ENCODE measurements at regions of chr12 and their contacts with region 1.

Region 1: GRCh38 chr12:120495723-120496412 is at the start of gene DYNLL1:
- DNase-seq: peak; percentile 96 to 98 (median 97)
- H3K4me3 ChIP-seq: peak within 1 kb of the TSS; percentile 93 to 94
- H3K4me3 Mint-ChIP-seq: peak within 1 kb of the TSS; percentile 91 to 98 (median 94)
- H3K27ac ChIP-seq: peak within 1 kb of the TSS; percentile 82
- H3K27ac Mint-ChIP-seq: peak within 1 kb of the TSS; percentile 89 to 96 (median 94)
- H3K4me1 ChIP-seq: peaks cover 19% of the 10 kb centered on the region
- H3K4me1 Mint-ChIP-seq: peaks cover 22 to 49% (median 37%) of the 10 kb centered on the region in 4 donors
- H3K27me3 ChIP-seq: no peaks in the 10 kb centered on the region
- H3K27me3 Mint-ChIP-seq: no peaks in the 10 kb centered on the region
- total RNA-seq, gene DYNLL1: 97.5 to 108 TPM

Region 2: DNA sequence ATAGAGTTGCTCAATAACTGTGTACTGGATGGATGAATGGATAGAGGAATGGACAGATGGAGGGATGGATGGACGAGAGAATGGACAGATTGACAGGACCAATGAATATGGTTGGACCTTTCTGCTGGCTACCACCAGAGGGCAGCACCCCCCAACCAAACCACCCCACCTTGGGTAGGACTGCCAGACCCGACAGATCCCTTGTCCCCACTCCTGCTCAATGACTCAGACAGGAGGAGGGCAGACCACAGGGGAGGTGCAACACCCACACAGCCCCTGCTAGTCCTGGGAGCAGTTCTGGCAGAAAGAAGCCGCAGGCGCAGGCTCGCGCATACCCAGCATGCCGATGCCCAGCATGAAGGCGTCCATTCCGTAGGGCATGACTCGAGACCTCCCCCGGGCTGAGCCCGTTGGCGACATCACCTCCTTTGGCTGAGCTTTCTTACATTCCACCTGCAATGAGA is 139.3 kb before region 1 on chr12:
- CTCF ChIA-PET with region 1: interaction called, 4 read pairs
- POLR2A ChIA-PET with region 1: no interaction called
- intact Hi-C with region 1: loop called (anchors 1 kb)
- DNase-seq: peak; percentile 59 to 66 (median 63)
- H3K4me3 ChIP-seq: no peak overlapping the region
- H3K4me3 Mint-ChIP-seq: no peak overlapping the region
- H3K27ac ChIP-seq: no peak overlapping the region
- H3K27ac Mint-ChIP-seq: peak overlapping the region in 1 of 7 donors; percentile 57
- H3K4me1 ChIP-seq: no peaks in the 10 kb centered on the region
- H3K4me1 Mint-ChIP-seq: peaks cover 0 to 1% (median 0%) of the 10 kb centered on the region in 4 donors
- H3K27me3 ChIP-seq: no peaks in the 10 kb centered on the region
- H3K27me3 Mint-ChIP-seq: peaks cover 9 to 30% of the 10 kb centered on the region in 2 donors

Region 3: DNA sequence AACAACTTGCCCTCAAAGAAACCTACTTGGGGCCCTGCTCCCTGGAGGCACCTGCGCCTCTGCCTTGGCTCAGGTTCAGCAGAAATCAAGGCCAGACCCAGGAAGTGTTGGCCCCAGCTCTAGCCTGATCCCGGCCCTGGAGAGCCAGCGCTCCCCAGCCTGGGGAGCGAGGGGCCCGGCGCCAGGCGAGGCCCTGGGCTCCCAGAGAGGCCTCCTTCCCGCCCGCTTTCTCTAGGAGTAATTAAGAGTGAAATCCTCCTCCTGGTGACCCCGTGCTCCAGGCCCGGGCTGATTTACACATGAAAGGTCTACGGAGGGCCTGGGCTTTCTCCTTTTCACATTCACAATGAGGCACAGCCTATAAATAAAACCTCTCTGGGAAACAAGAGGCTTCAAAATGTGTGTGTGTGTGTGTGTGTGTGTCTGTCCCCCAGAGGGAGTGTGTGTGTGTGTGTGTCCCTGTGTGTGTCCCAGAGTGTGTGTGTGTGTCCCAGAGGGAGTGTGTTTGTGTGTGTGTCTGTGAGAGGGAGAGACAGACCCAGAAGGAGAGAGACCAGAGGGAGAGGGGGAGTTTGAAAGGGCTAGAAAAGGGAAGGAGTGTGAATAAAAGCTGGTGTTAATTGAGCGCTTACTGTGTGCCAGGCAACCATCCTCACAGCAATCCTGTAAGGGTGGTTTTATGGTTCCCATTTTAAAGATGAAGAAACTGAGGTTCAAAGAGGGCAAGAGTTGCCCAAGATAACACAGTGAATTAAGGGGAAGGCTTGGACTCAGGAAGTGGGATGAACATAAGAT is 81.8 kb before region 1 on chr12:
- CTCF ChIA-PET with region 1: no interaction called
- POLR2A ChIA-PET with region 1: no interaction called
- intact Hi-C with region 1: no loop called
- DNase-seq: no peak
- H3K4me3 ChIP-seq: no peak overlapping the region
- H3K4me3 Mint-ChIP-seq: no peak overlapping the region
- H3K27ac ChIP-seq: no peak overlapping the region
- H3K27ac Mint-ChIP-seq: peak overlapping the region in 1 of 7 donors; percentile 13
- H3K4me1 ChIP-seq: no peaks in the 10 kb centered on the region
- H3K4me1 Mint-ChIP-seq: no peaks in the 10 kb centered on the region
- H3K27me3 ChIP-seq: no peaks in the 10 kb centered on the region
- H3K27me3 Mint-ChIP-seq: peaks cover 3 to 9% of the 10 kb centered on the region in 2 donors

Region 4: DNA sequence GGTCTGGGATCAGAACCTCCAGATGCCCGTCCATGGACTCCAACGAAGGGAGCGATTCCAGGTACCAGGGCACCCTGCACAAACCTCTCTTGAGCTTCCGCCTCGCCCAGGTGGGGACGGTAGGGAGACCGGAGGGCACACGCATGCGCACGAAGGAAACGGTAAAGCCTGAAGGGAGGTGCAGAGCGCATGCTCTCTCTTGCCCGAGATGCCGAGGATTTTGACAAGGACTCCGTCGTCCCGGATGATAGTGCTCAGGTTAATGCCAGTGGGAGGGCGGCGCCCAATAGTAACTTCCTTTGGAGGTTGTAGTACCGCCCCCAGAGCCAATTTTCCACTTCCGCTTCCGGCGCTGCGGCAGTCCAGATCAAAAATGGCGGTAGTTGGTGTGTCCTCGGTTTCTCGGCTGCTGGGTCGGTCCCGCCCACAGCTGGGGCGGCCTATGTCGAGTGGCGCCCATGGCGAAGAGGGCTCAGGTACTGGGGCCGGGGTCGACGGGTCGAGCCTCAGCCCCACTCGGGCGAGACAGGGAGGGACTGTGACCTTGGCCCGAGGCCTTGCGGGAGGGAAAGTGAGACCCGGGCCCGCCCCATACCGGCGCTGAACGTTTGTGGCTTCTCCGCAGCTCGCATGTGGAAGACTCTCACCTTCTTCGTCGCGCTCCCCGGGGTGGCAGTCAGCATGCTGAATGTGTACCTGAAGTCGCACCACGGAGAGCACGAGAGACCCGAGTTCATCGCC is 57.9 kb before region 1 on chr12 and contains the start of gene COX6A1:
- CTCF ChIA-PET with region 1: interaction called, 16 read pairs
- POLR2A ChIA-PET with region 1: interaction called, 8 read pairs
- intact Hi-C with region 1: loop called (anchors 2 kb)
- DNase-seq: peak; percentile 94 to 99 (median 98)
- H3K4me3 ChIP-seq: peak within 1 kb of the TSS; percentile 52 to 70
- H3K4me3 Mint-ChIP-seq: peak within 1 kb of the TSS; percentile 92 to 99 (median 96)
- H3K27ac ChIP-seq: peak within 1 kb of the TSS; percentile 76
- H3K27ac Mint-ChIP-seq: peak within 1 kb of the TSS; percentile 86 to 99 (median 96)
- H3K4me1 ChIP-seq: peaks cover 26% of the 10 kb centered on the region
- H3K4me1 Mint-ChIP-seq: peaks cover 18 to 31% (median 27%) of the 10 kb centered on the region in 4 donors
- H3K27me3 ChIP-seq: no peaks in the 10 kb centered on the region
- H3K27me3 Mint-ChIP-seq: peaks cover under 1 to 3% of the 10 kb centered on the region in 2 donors
- total RNA-seq, gene COX6A1: 144 to 158 TPM

Region 5: GRCh38 chr12:120528861-120529525 is 33.1 kb after region 1 on chr12 and contains the start of gene COQ5:
- CTCF ChIA-PET with region 1: no interaction called
- POLR2A ChIA-PET with region 1: interaction called, 24 read pairs
- intact Hi-C with region 1: loop called (anchors 1 kb)
- DNase-seq: peak; percentile 79 to 86 (median 83)
- H3K4me3 ChIP-seq: peak within 1 kb of the TSS; percentile 82 to 84
- H3K4me3 Mint-ChIP-seq: peak within 1 kb of the TSS; percentile 98 to 100 (median 100)
- H3K27ac ChIP-seq: peak within 1 kb of the TSS; percentile 85
- H3K27ac Mint-ChIP-seq: peak within 1 kb of the TSS; percentile 96 to 100 (median 99)
- H3K4me1 ChIP-seq: peaks cover 24% of the 10 kb centered on the region
- H3K4me1 Mint-ChIP-seq: peaks cover 20 to 35% (median 23%) of the 10 kb centered on the region in 4 donors
- H3K27me3 ChIP-seq: no peaks in the 10 kb centered on the region
- H3K27me3 Mint-ChIP-seq: no peaks in the 10 kb centered on the region
- total RNA-seq, gene COQ5: 19.7 to 21.6 TPM

Region 6: DNA sequence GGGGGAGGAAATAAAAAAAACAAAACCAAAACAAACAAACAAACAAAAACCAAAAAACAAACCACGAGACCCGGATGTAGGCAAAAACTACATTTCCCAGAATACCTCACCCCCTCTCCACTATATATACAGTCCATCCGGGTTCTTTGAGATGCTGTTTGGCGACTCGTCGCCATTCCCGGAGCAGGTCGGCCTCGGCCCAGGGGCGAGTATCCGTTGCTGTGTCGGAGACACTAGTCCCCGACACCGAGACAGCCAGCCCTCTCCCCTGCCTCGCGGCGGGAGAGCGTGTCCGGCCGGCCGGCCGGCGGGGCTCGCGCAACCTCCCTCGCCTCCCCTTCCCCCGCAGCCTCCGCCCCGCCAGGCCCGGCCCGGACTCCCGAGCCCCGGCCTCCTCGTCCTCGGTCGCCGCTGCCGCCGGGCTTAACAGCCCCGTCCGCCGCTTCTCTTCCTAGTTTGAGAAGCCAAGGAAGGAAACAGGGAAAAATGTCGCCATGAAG is 38.4 kb after region 1 on chr12 and contains the start of gene RNF10:
- CTCF ChIA-PET with region 1: interaction called, 8 read pairs
- POLR2A ChIA-PET with region 1: interaction called, 24 read pairs
- intact Hi-C with region 1: loop called (anchors 1 kb)
- DNase-seq: peak; percentile 85 to 87 (median 86)
- H3K4me3 ChIP-seq: peak within 1 kb of the TSS; percentile 62 to 88
- H3K4me3 Mint-ChIP-seq: peak within 1 kb of the TSS; percentile 92 to 97 (median 94)
- H3K27ac ChIP-seq: peak within 1 kb of the TSS; percentile 94
- H3K27ac Mint-ChIP-seq: peak within 1 kb of the TSS; percentile 95 to 98 (median 96)
- H3K4me1 ChIP-seq: peaks cover 59% of the 10 kb centered on the region
- H3K4me1 Mint-ChIP-seq: peaks cover 43 to 68% (median 49%) of the 10 kb centered on the region in 4 donors
- H3K27me3 ChIP-seq: no peaks in the 10 kb centered on the region
- H3K27me3 Mint-ChIP-seq: no peaks in the 10 kb centered on the region
- total RNA-seq, gene RNF10: 244 to 249 TPM

Measured in CD4-positive, alpha-beta memory T cell (primary cell).